GM23248 (cell line): ENCODE measurements at regions of chr3 and their contacts with region 1.

Region 1: GRCh38 chr3:126394575-126395228 is at the start of gene CFAP100:
- DNase-seq: peak; percentile 67
- H3K4me3 ChIP-seq: peak within 1 kb of the TSS; percentile 53
- H3K27ac ChIP-seq: no peak within 1 kb of the TSS
- H3K4me1 ChIP-seq: no peaks in the 10 kb centered on the region
- H3K27me3 ChIP-seq: peaks cover 31% of the 10 kb centered on the region
- total RNA-seq, gene CFAP100: not detected in 2 replicates

Region 2: GRCh38 chr3:126134219-126134975 is 260.3 kb before region 1 on chr3:
- in situ Hi-C with region 1: loop called (anchors 10 kb)
- DNase-seq: peak; percentile 68
- H3K4me3 ChIP-seq: no peak overlapping the region
- H3K27ac ChIP-seq: no peak overlapping the region
- H3K4me1 ChIP-seq: no peaks in the 10 kb centered on the region
- H3K27me3 ChIP-seq: peaks cover 13% of the 10 kb centered on the region

Region 3: GRCh38 chr3:126245811-126246727 is 148.6 kb before region 1 on chr3:
- in situ Hi-C with region 1: loop called (anchors 10 kb)
- DNase-seq: peak; percentile 75
- H3K4me3 ChIP-seq: no peak overlapping the region
- H3K27ac ChIP-seq: no peak overlapping the region
- H3K4me1 ChIP-seq: no peaks in the 10 kb centered on the region
- H3K27me3 ChIP-seq: peaks cover 20% of the 10 kb centered on the region

Region 4: GRCh38 chr3:126442094-126442855 is 47.6 kb after region 1 on chr3:
- in situ Hi-C with region 1: no loop called
- DNase-seq: no peak
- H3K4me3 ChIP-seq: no peak overlapping the region
- H3K27ac ChIP-seq: no peak overlapping the region
- H3K4me1 ChIP-seq: no peaks in the 10 kb centered on the region
- H3K27me3 ChIP-seq: no peaks in the 10 kb centered on the region